ACHN (cell line): ENCODE measurements at regions of chr18 and their contacts with region 1.

Region 1: DNA sequence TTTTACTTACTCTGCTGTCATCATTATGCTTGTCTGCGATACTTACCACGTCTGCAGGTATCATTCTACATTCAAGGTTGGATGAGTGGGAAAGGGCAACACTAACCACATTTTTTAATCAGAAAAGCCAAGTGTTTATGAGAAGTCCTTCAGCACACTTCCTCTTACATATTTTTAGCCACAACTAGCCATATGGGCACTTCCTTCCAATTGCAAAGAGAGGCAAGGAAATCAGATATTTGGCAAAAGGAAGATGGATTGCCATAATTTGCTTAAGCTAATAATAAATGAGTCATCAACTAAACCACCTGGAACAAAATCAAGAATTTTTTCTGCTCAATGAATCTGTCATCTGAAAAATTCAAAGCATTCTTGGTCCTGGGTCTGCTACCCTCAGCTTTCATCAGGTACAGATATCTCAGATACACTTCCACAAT is 16.7 kb upstream of the MRO start:
- DNase-seq: peak; percentile 31

Region 2: GRCh38 chr18:51029694-51030536 is 193.4 kb after region 1 on chr18 and contains the start of gene SMAD4:
- in situ Hi-C with region 1: loop called (anchors 25 kb)
- DNase-seq: peak; percentile 92

Region 3: GRCh38 chr18:51383116-51383515 is 546.6 kb after region 1 on chr18:
- in situ Hi-C with region 1: no loop called
- DNase-seq: no peak